ENCODE measurements at regions of chr17 and their contacts with region 1.

Region 1: DNA sequence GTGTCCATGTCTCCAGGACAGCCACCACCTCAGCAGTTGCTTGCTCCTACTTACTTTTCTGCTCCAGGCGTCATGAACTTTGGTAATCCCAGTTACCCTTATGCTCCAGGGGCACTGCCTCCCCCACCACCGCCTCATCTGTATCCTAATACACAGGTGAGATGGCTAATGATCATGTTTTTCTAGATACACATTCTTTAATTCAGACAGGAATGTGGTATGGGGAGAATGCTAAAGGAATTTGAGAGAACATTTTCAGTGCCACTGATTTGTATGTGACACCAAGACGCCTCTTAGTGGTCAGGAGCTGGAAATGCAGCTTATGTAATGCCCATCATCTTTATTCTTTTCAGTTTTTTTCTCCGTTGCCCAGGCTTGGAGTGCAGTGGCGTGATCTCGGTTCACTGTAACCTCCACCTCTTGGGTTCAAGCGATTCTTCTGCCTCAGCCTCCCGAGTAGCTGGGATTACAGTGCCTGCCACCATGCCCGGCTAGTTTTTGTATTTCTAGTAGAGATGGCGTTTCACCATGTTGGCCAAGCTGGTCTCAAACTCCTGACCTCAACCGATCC is 8.9 kb upstream of the RAPGEFL1 start:
- DNase-seq: no peak

Region 2: GRCh38 chr17:40121181-40122135 is 46.9 kb before region 1 on chr17 and contains the start of gene MSL1:
- intact Hi-C with region 1: loop called in 1 of 2 experiments (anchors 5 kb)
- DNase-seq: peak; percentile 97
- total RNA-seq, gene MSL1: 66.7 to 68.8 TPM

Region 3: GRCh38 chr17:40139566-40140058 is 28.7 kb before region 1 on chr17:
- intact Hi-C with region 1: no loop called
- DNase-seq: no peak

Region 4: GRCh38 chr17:40230670-40231069 is 62.3 kb after region 1 on chr17:
- intact Hi-C with region 1: no loop called
- DNase-seq: no peak

Region 5: GRCh38 chr17:40415390-40415789 is 247.0 kb after region 1 on chr17:
- intact Hi-C with region 1: no loop called
- DNase-seq: no peak